HepG2 (cell line): ENCODE measurements at regions of chr2 and their contacts with region 1.

Region 1: GRCh38 chr2:96760036-96760985 is at the start of gene CNNM4:
- DNase-seq: peak; percentile 88
- ATAC-seq: peak; percentile 75
- H3K4me3 ChIP-seq: peak within 1 kb of the TSS; percentile 59 to 94 (median 77)
- H3K27ac ChIP-seq: peak within 1 kb of the TSS; percentile 39
- H3K4me1 ChIP-seq: peaks cover 65% of the 10 kb centered on the region
- H3K27me3 ChIP-seq: peaks cover 3 to 14% of the 10 kb centered on the region in 2 experiments; a peak in 3 of 5 replicates
- CTCF ChIP-seq: peak; percentile 57
- EP300 ChIP-seq: 0 out of 4 replicates have a peak, but pooled peaks of 1 of the 2 experiments have one; percentile 8
- POLR2A ChIP-seq: peak in 1 of 2 experiments; percentile 57; a peak in 2 of 4 replicates
- RAD21 ChIP-seq: no peak
- total RNA-seq, gene CNNM4: 3.0 and 5.9 TPM in 2 replicates

Region 2: GRCh38 chr2:96536445-96537065 is 223.8 kb before region 1 on chr2 and contains the start of gene ARID5A:
- CTCF ChIA-PET with region 1: no interaction called
- POLR2A ChIA-PET with region 1: interaction called, 4 read pairs
- in situ Hi-C with region 1: no loop called
- intact Hi-C with region 1: loop called (anchors 5 kb)
- DNase-seq: peak; percentile 87
- ATAC-seq: peak; percentile 90
- H3K4me3 ChIP-seq: peak within 1 kb of the TSS; percentile 70 to 79 (median 74)
- H3K27ac ChIP-seq: no peak within 1 kb of the TSS
- H3K4me1 ChIP-seq: peaks cover 52% of the 10 kb centered on the region
- H3K27me3 ChIP-seq: peaks cover 3 to 37% of the 10 kb centered on the region in 2 experiments; a peak in 4 of 5 replicates
- CTCF ChIP-seq: no peak
- EP300 ChIP-seq: no peak
- POLR2A ChIP-seq: peak; percentile 43 to 88; a peak in 3 of 4 replicates
- RAD21 ChIP-seq: peak; percentile 11; the same call in 1 of the 2 replicates
- total RNA-seq, gene ARID5A: 8.0 and 9.5 TPM in 2 replicates

Region 3: GRCh38 chr2:96608469-96609455 is 151.5 kb before region 1 on chr2:
- CTCF ChIA-PET with region 1: interaction called, 3 read pairs
- POLR2A ChIA-PET with region 1: no interaction called
- in situ Hi-C with region 1: no loop called
- intact Hi-C with region 1: loop called (anchors 10 kb)
- DNase-seq: peak; percentile 40
- ATAC-seq: no peak; the same call in 2 of the 3 replicates
- H3K4me3 ChIP-seq: no peak overlapping the region
- H3K27ac ChIP-seq: peak overlapping the region; percentile 38
- H3K4me1 ChIP-seq: peaks cover 16% of the 10 kb centered on the region
- H3K27me3 ChIP-seq: no peaks in the 10 kb centered on the region
- CTCF ChIP-seq: no peak
- EP300 ChIP-seq: no peak
- POLR2A ChIP-seq: no peak
- RAD21 ChIP-seq: no peak

Region 4: GRCh38 chr2:96801005-96801785 is 40.9 kb after region 1 on chr2:
- CTCF ChIA-PET with region 1: interaction called, 3 read pairs
- POLR2A ChIA-PET with region 1: no interaction called
- in situ Hi-C with region 1: no loop called
- intact Hi-C with region 1: loop called (anchors 1 kb)
- DNase-seq: peak; percentile 71
- ATAC-seq: peak; percentile 95
- H3K4me3 ChIP-seq: peak overlapping the region in 1 of 3 experiments; percentile 11; a peak in 1 of 6 replicates
- H3K27ac ChIP-seq: no peak overlapping the region
- H3K4me1 ChIP-seq: peaks cover 25% of the 10 kb centered on the region
- H3K27me3 ChIP-seq: no peaks in the 10 kb centered on the region
- CTCF ChIP-seq: peak; percentile 97
- EP300 ChIP-seq: no peak
- POLR2A ChIP-seq: no peak
- RAD21 ChIP-seq: peak; percentile 97

Region 5: DNA sequence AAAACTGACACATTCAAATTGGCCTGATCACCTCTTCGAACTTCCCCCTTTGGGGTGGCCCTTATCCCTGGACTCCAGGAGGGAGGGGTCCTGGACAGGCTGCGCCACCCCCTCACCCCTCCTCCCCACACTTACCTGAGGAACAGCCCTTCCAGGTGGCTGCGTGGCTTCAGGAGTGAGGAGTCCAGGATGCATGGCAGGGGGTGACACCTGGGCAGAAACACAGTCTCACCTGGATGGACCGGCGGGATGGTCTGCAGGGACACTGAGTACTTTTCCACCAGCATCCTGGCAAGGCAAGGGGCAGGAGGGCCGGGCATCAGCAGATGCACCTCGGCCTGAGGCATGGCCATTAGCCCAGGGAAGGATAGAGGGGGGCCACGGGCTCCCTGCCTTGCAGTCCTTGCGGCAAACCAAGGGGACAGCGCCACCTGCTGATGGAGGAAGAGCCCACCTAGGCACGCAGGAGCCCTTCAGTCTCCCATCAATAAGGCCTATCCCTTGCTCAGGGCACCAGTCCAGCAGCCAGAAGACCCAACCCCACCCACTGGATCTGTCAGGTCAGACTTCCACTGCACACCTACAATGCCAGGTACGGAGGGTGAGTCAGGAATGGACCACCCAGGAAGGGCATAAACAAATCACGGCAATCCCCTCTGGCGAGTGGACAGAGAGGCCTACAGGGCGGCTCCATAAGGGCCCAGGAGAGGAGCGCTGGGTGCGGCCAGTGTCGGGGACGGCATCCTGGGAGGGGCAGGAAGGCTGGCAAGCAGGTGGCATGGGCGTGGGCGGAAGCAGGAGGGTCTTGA is 200.0 kb after region 1 on chr2:
- CTCF ChIA-PET with region 1: no interaction called
- POLR2A ChIA-PET with region 1: no interaction called
- in situ Hi-C with region 1: no loop called
- intact Hi-C with region 1: loop called (anchors 5 kb)
- DNase-seq: peak; percentile 76
- ATAC-seq: peak; percentile 98
- H3K4me3 ChIP-seq: no peak overlapping the region
- H3K27ac ChIP-seq: no peak overlapping the region
- H3K4me1 ChIP-seq: no peaks in the 10 kb centered on the region
- H3K27me3 ChIP-seq: peaks cover 0 to 35% of the 10 kb centered on the region in 2 experiments; a peak in 3 of 5 replicates
- CTCF ChIP-seq: peak; percentile 100
- EP300 ChIP-seq: no peak
- POLR2A ChIP-seq: no peak
- RAD21 ChIP-seq: peak; percentile 97

Region 6: GRCh38 chr2:98078701-98079100 is 1318.4 kb after region 1 on chr2:
- CTCF ChIA-PET with region 1: no interaction called
- POLR2A ChIA-PET with region 1: no interaction called
- in situ Hi-C with region 1: no loop called
- intact Hi-C with region 1: no loop called
- DNase-seq: no peak
- ATAC-seq: no peak
- H3K4me3 ChIP-seq: no peak overlapping the region
- H3K27ac ChIP-seq: no peak overlapping the region
- H3K4me1 ChIP-seq: no peaks in the 10 kb centered on the region
- H3K27me3 ChIP-seq: no peaks in the 10 kb centered on the region; a peak in 1 of 5 replicates
- CTCF ChIP-seq: no peak
- EP300 ChIP-seq: no peak
- POLR2A ChIP-seq: no peak
- RAD21 ChIP-seq: no peak